Dorsolateral prefrontal cortex (tissue), 120 donors: ENCODE measurements at regions of chr12 and their contacts with region 1.

Region 1: GRCh38 chr12:117367011-117367638 is 5.7 kb upstream of the NOS1 start:
- DNase-seq: peak; percentile 54 to 88 (median 83)
- H3K4me3 ChIP-seq: no peak overlapping the region
- H3K27ac ChIP-seq: no peak overlapping the region
- H3K27me3 ChIP-seq: peaks cover 0 to 28% (median 10%) of the 10 kb centered on the region in 45 donors
- CTCF ChIP-seq: peak; percentile 60 to 99 (median 94)

Region 2: GRCh38 chr12:117236456-117237001 is 130.6 kb before region 1 on chr12:
- intact Hi-C with region 1: loop called in 1 of 2 experiments (anchors 5 kb)
- DNase-seq: peak; percentile 85 to 96 (median 92)
- H3K4me3 ChIP-seq: no peak overlapping the region
- H3K27ac ChIP-seq: no peak overlapping the region
- H3K27me3 ChIP-seq: peaks cover 0 to 3% (median 0%) of the 10 kb centered on the region in 45 donors
- CTCF ChIP-seq: peak; percentile 70 to 94 (median 87)

Region 3: DNA sequence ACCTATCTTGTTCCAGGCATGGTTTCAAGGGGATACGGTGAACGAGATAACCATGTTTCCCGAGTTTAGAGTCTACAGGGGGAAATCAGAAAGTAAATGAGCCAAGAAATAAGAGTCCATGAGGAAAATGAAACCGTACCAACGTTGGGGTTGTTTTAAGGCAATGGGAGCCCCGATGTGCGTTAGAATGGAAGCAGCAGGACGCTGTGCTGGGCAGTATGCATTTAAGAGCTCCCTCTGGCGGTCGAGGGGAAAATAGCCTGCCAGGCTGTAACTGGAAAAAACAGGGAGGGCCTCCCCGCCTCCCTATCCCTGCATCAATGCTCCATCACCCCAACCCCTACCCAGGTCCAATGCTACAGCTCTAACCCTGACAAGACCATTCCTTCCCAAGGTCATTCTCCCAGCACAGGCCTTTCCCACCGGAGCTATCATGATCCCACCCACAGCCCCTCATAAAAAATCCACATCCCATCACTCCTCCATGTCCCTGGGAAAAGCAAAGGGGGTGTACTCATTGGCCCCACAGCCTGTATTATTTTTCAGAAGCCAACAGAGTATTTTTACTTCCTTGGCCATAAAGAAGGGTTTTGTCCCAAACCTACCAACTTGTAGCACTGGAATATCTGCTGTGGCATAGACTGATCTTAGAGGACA is 220.6 kb after region 1 on chr12:
- intact Hi-C with region 1: loop called (anchors 1 to 5 kb)
- DNase-seq: peak in 8 of 10 donors; percentile 23 to 64 (median 44)
- H3K4me3 ChIP-seq: no peak overlapping the region
- H3K27ac ChIP-seq: no peak overlapping the region
- H3K27me3 ChIP-seq: peaks cover 0 to 3% (median 0%) of the 10 kb centered on the region in 45 donors
- CTCF ChIP-seq: peak; percentile 51 to 86 (median 76)

Region 4: DNA sequence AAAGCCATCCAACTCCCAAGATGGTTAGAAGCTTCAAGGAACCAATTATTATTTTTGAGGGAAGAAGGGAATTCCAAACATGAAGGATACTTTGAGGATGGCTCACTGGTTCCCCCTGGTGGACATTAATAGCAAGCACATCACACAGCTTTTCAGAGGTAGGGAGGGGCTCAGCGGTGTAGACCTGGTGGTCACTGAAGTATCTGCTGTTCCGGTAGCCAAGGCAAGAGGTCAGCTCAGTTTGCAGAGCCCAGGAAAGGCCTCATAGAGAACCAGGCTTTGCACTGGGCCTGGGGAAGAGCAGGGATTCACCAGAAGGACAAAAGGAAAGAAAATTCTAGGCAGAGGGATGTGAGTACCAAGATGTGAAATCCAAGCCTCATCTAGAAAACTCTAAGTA is 482.9 kb after region 1 on chr12:
- intact Hi-C with region 1: loop called in 1 of 2 experiments (anchors 5 kb)
- DNase-seq: peak in 2 of 10 donors; percentile 36 to 49
- H3K4me3 ChIP-seq: no peak overlapping the region
- H3K27ac ChIP-seq: no peak overlapping the region
- H3K27me3 ChIP-seq: peaks cover 0 to 13% (median 0%) of the 10 kb centered on the region in 45 donors
- CTCF ChIP-seq: peak; percentile 61 to 93 (median 83)